Activated naive CD4-positive, alpha-beta T cell treated with anti-CD3 and anti-CD28 coated beads for 36 hours (primary cell): ENCODE measurements at regions of chr11 and their contacts with region 1.

Region 1: DNA sequence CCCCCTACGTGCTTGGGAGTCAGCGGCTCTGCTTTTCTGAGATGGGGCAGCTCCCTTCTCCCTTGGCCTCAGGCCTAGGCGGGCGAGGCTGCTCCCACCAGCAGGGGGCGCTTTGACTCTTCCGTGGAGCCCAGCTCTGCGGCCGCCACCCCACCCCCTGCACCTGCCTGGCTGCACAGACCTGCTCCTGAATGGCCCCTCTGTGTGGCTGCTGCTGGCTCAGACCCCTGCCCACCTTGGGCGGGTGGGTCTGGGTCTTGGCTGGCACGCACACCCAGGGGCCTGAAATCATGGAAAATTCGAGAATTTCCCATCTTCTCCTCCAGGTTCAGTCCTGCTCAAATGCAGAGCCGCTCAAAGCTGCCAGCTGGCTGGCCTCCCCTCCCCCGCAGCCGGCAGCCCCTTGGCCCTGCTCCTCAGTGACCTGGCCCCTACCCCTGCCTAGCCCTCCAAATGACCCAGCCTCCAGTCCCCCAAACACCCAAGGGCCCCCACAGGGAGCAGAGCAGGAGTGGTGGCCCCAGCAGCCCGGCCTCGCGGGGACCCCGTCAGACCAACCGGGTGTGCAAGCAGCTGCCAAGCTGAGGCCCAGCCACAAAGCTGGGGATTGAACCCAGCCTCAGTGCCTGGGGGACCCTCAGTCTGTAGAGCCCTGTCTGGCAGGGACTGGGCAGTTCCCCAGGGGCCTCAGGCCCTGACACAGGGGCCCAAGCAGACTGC is 9.0 kb downstream of the PRR33 start:
- DNase-seq: peak; percentile 85
- H3K4me3 Mint-ChIP-seq: no peak overlapping the region
- H3K27ac Mint-ChIP-seq: no peak overlapping the region
- H3K4me1 Mint-ChIP-seq: peaks cover 3% of the 10 kb centered on the region
- H3K27me3 Mint-ChIP-seq: no peaks in the 10 kb centered on the region

Region 2: GRCh38 chr11:1837171-1838076 is 45.3 kb before region 1 on chr11:
- CTCF ChIA-PET with region 1: interaction called, 8 read pairs
- intact Hi-C with region 1: loop called (anchors 10 kb)
- DNase-seq: peak; percentile 77
- H3K4me3 Mint-ChIP-seq: no peak overlapping the region
- H3K27ac Mint-ChIP-seq: no peak overlapping the region
- H3K4me1 Mint-ChIP-seq: no peaks in the 10 kb centered on the region
- H3K27me3 Mint-ChIP-seq: no peaks in the 10 kb centered on the region

Region 3: DNA sequence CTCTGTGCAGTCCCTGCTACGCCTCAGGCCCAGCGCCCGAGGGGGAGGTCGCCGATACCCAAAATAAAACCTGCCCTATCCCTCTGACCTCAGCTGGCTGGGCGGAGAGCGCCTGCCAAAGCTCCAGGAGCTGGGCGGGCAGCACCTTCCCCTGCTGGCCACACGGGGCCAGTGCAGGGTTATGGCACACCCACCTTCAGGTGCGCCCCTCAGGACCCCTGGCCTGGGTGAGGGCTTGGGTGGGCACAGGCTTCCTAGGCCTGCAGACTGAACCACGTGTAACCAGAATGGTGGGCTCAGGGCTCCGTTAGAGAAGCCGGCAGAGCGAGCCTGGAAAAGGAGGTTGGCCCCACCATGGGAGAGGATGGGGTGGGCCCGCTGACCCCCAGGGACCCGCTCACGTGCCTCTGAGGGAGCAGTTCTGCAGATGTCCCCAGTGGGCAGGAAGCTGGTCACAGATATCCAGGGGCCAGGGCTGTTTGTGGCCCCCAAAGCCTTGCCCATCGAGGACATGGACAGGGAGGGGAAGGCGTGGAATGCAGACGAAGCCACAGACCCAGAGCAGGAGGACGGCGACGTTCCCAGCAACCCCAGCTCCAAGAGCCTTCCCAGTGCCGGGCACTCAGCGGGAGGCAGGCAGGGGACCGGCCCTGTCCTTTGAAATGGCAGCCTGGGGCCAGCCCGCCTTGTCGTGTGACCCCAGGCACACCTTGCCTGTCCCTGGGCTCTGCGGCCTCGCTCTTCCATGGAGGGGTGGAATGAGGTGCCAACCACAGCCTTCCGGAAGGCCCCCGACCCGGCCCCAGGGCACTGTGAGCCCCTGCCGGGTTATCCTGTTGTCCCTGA is 35.2 kb after region 1 on chr11:
- CTCF ChIA-PET with region 1: interaction called, 6 read pairs
- intact Hi-C with region 1: loop called (anchors 5 kb)
- DNase-seq: no peak
- H3K4me3 Mint-ChIP-seq: no peak overlapping the region
- H3K27ac Mint-ChIP-seq: no peak overlapping the region
- H3K4me1 Mint-ChIP-seq: peaks cover 11% of the 10 kb centered on the region
- H3K27me3 Mint-ChIP-seq: peaks cover 3% of the 10 kb centered on the region

Region 4: DNA sequence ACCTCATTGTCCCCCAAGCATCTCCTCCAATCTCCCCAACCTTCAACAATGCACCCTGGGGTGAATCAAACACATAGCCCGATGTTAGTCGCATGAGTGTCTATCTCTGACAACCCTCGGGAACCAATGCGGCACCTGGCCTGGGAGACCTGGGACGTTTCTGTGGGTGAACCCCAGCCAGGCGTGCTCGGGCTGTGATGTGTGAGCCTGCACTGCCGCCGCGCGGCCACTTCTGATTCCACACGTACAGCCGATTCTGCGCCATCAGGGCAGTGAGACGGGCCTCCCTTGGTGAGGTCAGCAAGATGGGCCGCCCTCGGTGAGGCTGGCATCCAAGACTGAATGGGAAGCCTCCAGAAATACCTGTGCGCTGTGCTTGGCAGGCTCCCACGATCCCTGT is 120.1 kb after region 1 on chr11:
- CTCF ChIA-PET with region 1: interaction called, 13 read pairs
- intact Hi-C with region 1: no loop called
- DNase-seq: no peak
- H3K4me3 Mint-ChIP-seq: no peak overlapping the region
- H3K27ac Mint-ChIP-seq: no peak overlapping the region
- H3K4me1 Mint-ChIP-seq: no peaks in the 10 kb centered on the region
- H3K27me3 Mint-ChIP-seq: no peaks in the 10 kb centered on the region

Region 5: GRCh38 chr11:2269601-2270321 is 387.1 kb after region 1 on chr11:
- CTCF ChIA-PET with region 1: no interaction called
- intact Hi-C with region 1: no loop called
- DNase-seq: peak; percentile 51
- H3K4me3 Mint-ChIP-seq: peak overlapping the region; percentile 36
- H3K27ac Mint-ChIP-seq: no peak overlapping the region
- H3K4me1 Mint-ChIP-seq: peaks cover 25% of the 10 kb centered on the region
- H3K27me3 Mint-ChIP-seq: peaks cover 25% of the 10 kb centered on the region